ENCODE measurements at regions of chr16 and their contacts with region 1.

Region 1: GRCh38 chr16:27193302-27193990 is 9.9 kb upstream of the KDM8 start:
- DNase-seq: no peak
- ATAC-seq: no peak
- H3K4me3 ChIP-seq: no peak overlapping the region
- H3K4me3 Mint-ChIP-seq: no peak overlapping the region
- H3K27ac ChIP-seq: no peak overlapping the region
- H3K27ac Mint-ChIP-seq: peak overlapping the region; percentile 95
- H3K4me1 ChIP-seq: peaks cover 50% of the 10 kb centered on the region
- H3K4me1 Mint-ChIP-seq: peaks cover 65% of the 10 kb centered on the region
- H3K27me3 ChIP-seq: no peaks in the 10 kb centered on the region
- H3K27me3 Mint-ChIP-seq: no peaks in the 10 kb centered on the region
- CTCF ChIP-seq: no peak

Region 2: GRCh38 chr16:26840691-26841090 is 352.8 kb before region 1 on chr16:
- CTCF ChIA-PET with region 1: no interaction called
- POLR2A ChIA-PET with region 1: no interaction called
- intact Hi-C with region 1: no loop called
- DNase-seq: no peak
- ATAC-seq: no peak
- H3K4me3 ChIP-seq: no peak overlapping the region
- H3K4me3 Mint-ChIP-seq: no peak overlapping the region
- H3K27ac ChIP-seq: no peak overlapping the region
- H3K27ac Mint-ChIP-seq: no peak overlapping the region
- H3K4me1 ChIP-seq: no peaks in the 10 kb centered on the region
- H3K4me1 Mint-ChIP-seq: no peaks in the 10 kb centered on the region
- H3K27me3 ChIP-seq: no peaks in the 10 kb centered on the region
- H3K27me3 Mint-ChIP-seq: peaks cover 11% of the 10 kb centered on the region
- CTCF ChIP-seq: no peak

Region 3: GRCh38 chr16:27169511-27170071 is 23.9 kb before region 1 on chr16:
- CTCF ChIA-PET with region 1: interaction called, 13 read pairs
- POLR2A ChIA-PET with region 1: interaction called, 12 read pairs
- intact Hi-C with region 1: loop called in 1 of 2 experiments (anchors 1 kb)
- DNase-seq: peak; percentile 55 to 94 (median 75)
- ATAC-seq: peak; percentile 84
- H3K4me3 ChIP-seq: peak overlapping the region; percentile 5
- H3K4me3 Mint-ChIP-seq: peak overlapping the region; percentile 2
- H3K27ac ChIP-seq: peak overlapping the region in 1 of 2 donors; percentile 21
- H3K27ac Mint-ChIP-seq: peak overlapping the region; percentile 71
- H3K4me1 ChIP-seq: peaks cover 66% of the 10 kb centered on the region
- H3K4me1 Mint-ChIP-seq: peaks cover 75% of the 10 kb centered on the region
- H3K27me3 ChIP-seq: no peaks in the 10 kb centered on the region
- H3K27me3 Mint-ChIP-seq: no peaks in the 10 kb centered on the region
- CTCF ChIP-seq: no peak

Measured in CD4-positive, alpha-beta T cell (primary cell).